Left cardiac atrium (tissue), 4 donors: ENCODE measurements at regions of chr7 and their contacts with region 1.

Region 1: GRCh38 chr7:140653319-140654108 is 12.9 kb upstream of the DENND2A start:
- DNase-seq: peak; percentile 51
- ATAC-seq: peak; percentile 62 to 73

Region 2: DNA sequence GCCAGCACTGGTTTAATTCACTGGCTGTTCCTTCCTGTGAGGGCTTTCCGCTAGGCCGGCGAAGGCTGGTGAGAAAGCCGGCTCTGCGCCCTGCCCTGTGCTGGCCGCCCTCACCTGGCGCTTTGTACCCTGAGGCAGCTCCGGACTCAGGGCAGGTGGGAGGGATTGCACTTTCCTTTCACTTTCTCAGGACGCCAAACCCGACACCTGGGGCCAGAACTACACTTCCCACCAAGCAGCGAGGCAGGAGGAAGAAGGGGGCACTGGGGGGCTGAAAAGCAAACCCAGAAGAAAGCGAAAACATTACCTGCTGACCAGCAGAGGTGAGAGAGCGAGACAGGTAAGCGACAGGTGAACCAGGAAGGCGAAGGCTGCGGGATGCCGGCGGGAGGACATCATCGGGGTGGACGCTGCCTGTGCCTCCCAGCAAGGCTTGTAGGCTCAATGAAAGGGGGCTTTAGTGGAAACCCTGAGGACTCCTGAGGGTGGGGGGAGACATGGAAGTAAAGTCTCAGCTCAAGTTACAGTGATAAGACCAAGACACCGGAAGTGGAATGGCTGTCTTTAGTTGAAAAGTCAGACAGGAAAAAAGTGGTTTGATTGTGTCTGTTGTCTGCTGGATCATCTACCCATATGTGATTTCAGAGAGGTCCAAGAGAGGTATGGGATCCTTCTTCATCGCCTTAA is 249.5 kb before region 1 on chr7 and contains the start of gene RAB19:
- intact Hi-C with region 1: no loop called
- DNase-seq: no peak
- ATAC-seq: peak; percentile 38 to 52
- total RNA-seq, gene RAB19: not detected

Region 3: GRCh38 chr7:140479062-140479738 is 174.3 kb before region 1 on chr7 and contains the start of gene MKRN1:
- intact Hi-C with region 1: loop called in 1 of 2 experiments (anchors 5 kb)
- DNase-seq: peak; percentile 95
- ATAC-seq: peak; percentile 98
- total RNA-seq, gene MKRN1: 65.4 to 79.2 TPM

Region 4: GRCh38 chr7:140517546-140518369 is 135.8 kb before region 1 on chr7:
- intact Hi-C with region 1: loop called (anchors 1 to 2 kb)
- DNase-seq: peak; percentile 92
- ATAC-seq: peak; percentile 93 to 95

Region 5: DNA sequence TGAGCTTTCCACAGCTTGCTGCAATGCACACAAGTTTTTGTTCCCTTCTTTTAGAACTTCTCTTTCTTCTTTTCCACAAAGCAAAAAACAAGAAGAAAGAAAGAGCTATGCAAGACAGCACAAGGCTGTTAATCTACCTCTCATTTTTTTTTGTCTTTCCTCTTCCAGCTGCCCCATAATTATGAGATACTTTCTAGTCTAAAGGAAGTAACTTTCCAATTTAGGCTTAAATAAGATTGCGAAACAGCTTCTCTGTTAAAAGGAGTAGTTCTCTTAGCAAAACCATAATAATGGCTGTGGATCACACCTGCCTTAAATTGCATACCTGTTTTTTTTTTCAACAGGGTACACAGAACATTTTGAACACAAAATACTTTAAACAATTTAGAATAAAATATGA is 99.0 kb after region 1 on chr7:
- intact Hi-C with region 1: no loop called
- DNase-seq: no peak
- ATAC-seq: no peak

Region 6: GRCh38 chr7:141737834-141738591 is 1084.5 kb after region 1 on chr7 and contains the start of gene SSBP1:
- intact Hi-C with region 1: no loop called
- DNase-seq: peak; percentile 90
- ATAC-seq: peak; percentile 98
- total RNA-seq, gene SSBP1: 80.6 to 109 TPM